ENCODE measurements at regions of chr15 and their contacts with region 1.

Region 1: GRCh38 chr15:58546635-58547627 is 115.1 kb downstream of the LIPC start:
- DNase-seq: peak; percentile 96
- ATAC-seq: peak; percentile 97
- H3K4me3 ChIP-seq: no peak overlapping the region
- H3K27ac ChIP-seq: peak overlapping the region; percentile 72
- H3K4me1 ChIP-seq: peaks cover 31% of the 10 kb centered on the region
- H3K27me3 ChIP-seq: no peaks in the 10 kb centered on the region
- CTCF ChIP-seq: no peak

Region 2: DNA sequence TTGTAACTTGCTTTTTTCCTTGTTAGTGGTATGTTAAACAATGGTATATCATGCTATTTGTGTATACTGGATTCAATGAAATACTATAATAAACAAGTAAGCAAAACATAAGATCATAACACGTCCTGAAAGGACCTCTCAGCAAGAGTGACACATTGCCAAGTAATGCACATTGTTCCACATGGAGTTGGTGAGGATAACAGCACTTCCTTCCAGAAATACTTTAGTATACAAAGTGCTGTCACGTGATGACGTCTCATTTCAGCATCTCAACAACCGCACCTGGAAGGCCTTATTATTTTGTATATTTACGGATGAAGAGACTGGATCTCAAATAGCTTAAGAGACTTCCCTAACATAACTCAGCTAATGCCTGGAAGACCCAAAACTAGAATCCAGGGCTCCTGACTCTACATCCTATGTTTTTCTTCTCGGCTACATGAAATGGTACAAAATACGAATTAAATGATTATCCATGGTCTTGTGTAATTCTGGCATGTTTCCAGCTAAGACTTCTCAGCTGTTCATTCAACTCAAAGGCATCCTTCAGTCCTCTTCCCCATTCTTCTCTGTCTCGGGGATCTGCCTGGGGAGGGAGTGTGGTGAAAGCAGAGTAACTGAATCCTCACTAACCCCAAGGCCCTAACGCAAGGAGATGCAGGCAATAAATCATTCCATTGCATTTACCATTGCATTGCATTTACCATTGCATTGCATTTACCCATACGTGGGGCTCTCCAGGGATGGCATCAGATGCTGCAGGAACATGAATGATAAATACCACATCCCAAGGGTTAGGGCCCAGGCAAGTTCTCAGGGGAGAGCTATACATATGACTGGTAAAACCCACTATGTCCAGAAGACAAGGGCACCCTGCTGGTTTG is 36.0 kb before region 1 on chr15:
- CTCF ChIA-PET with region 1: no interaction called
- POLR2A ChIA-PET with region 1: no interaction called
- intact Hi-C with region 1: no loop called
- DNase-seq: peak; percentile 3
- ATAC-seq: no peak
- H3K4me3 ChIP-seq: no peak overlapping the region
- H3K27ac ChIP-seq: no peak overlapping the region
- H3K4me1 ChIP-seq: no peaks in the 10 kb centered on the region
- H3K27me3 ChIP-seq: no peaks in the 10 kb centered on the region
- CTCF ChIP-seq: no peak

Region 3: DNA sequence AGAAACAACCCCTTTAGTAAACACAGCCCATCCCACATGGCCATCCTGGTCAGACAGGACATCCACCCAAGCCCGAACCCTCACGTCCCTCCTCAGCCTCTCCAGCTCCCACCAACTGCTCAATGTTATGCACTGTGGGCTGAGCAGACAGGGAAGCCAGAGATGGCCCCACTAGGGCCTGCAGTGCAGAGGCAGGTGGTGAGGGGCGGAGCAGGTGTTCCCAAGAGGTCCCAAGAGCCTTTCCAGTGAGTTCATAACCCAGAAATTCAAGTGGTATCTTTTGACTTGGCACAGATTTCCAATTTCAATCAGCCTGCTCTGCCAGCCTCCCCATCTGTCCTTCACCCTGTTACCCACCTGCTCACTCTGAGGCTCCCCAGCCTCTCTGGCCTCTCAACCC is 15.2 kb after region 1 on chr15:
- CTCF ChIA-PET with region 1: no interaction called
- POLR2A ChIA-PET with region 1: no interaction called
- intact Hi-C with region 1: no loop called
- DNase-seq: no peak
- ATAC-seq: no peak
- H3K4me3 ChIP-seq: no peak overlapping the region
- H3K27ac ChIP-seq: no peak overlapping the region
- H3K4me1 ChIP-seq: no peaks in the 10 kb centered on the region
- H3K27me3 ChIP-seq: no peaks in the 10 kb centered on the region
- CTCF ChIP-seq: no peak

Region 4: GRCh38 chr15:58628206-58628947 is 81.4 kb after region 1 on chr15:
- CTCF ChIA-PET with region 1: no interaction called
- POLR2A ChIA-PET with region 1: no interaction called
- intact Hi-C with region 1: no loop called
- DNase-seq: no peak
- ATAC-seq: no peak
- H3K4me3 ChIP-seq: no peak overlapping the region
- H3K27ac ChIP-seq: no peak overlapping the region
- H3K4me1 ChIP-seq: no peaks in the 10 kb centered on the region
- H3K27me3 ChIP-seq: no peaks in the 10 kb centered on the region
- CTCF ChIP-seq: no peak

Region 5: GRCh38 chr15:58677426-58677825 is 130.5 kb after region 1 on chr15:
- CTCF ChIA-PET with region 1: no interaction called
- POLR2A ChIA-PET with region 1: no interaction called
- intact Hi-C with region 1: no loop called
- DNase-seq: no peak
- ATAC-seq: no peak
- H3K4me3 ChIP-seq: no peak overlapping the region
- H3K27ac ChIP-seq: no peak overlapping the region
- H3K4me1 ChIP-seq: no peaks in the 10 kb centered on the region
- H3K27me3 ChIP-seq: no peaks in the 10 kb centered on the region
- CTCF ChIP-seq: no peak

Region 6: DNA sequence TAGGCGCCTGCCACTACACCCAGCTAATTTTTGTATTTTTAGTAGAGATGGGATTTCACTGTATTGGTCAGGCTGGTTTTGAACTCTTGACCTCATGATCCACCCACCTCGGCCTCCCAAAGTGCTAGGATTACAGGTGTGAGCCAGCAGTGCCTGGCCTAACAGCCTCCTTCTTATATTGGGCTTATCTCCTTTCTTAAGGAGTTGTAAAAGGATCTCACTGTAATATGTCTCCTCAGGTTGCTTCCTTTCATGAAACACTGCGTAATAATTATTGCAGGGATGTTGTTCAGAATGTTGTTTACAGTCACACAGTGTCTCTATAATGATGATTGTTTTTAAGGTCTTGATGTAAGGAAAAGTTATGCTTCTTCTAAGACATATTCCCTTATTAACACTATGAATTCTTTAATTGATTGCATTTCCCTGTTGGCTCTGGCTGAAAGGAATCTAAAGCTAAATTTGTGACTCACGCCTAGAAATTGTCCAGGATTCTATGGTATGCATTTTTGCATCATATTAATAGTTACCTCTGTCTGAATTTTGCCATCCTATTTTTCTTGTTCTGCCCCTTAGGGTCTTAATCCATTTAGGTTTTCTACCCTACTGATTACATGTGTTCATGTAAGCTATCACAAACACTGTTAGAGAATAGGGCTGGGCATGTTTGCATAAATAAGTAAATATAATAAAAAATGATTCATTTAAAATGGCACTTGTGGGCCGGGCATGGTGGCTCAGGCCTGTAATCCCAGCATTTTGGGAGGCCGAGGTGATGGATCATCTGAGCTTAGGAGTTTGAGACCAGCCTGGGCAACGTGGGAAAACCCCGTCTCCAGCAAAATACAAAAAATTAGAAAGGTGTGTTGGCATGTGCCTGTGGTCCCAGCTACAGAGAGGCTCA is 416.0 kb after region 1 on chr15:
- CTCF ChIA-PET with region 1: no interaction called
- POLR2A ChIA-PET with region 1: interaction called, 28 read pairs
- intact Hi-C with region 1: no loop called
- DNase-seq: peak; percentile 59
- ATAC-seq: peak; percentile 93
- H3K4me3 ChIP-seq: no peak overlapping the region
- H3K27ac ChIP-seq: peak overlapping the region; percentile 57
- H3K4me1 ChIP-seq: peaks cover 21% of the 10 kb centered on the region
- H3K27me3 ChIP-seq: no peaks in the 10 kb centered on the region
- CTCF ChIP-seq: no peak

Measured in PC-3 (cell line).